Left cardiac atrium (tissue), 4 donors: ENCODE measurements at regions of chr1 and their contacts with region 1.

Region 1: GRCh38 chr1:236058141-236058934 is 6.6 kb downstream of the NID1 start:
- DNase-seq: no peak
- ATAC-seq: peak; percentile 11 to 32

Region 2: GRCh38 chr1:235679644-235680043 is 378.7 kb before region 1 on chr1:
- intact Hi-C with region 1: no loop called
- DNase-seq: no peak
- ATAC-seq: no peak

Region 3: GRCh38 chr1:236009857-236010256 is 48.5 kb before region 1 on chr1:
- intact Hi-C with region 1: loop called in 1 of 2 experiments (anchors 10 kb)
- DNase-seq: no peak
- ATAC-seq: peak; percentile 51 to 59

Region 4: DNA sequence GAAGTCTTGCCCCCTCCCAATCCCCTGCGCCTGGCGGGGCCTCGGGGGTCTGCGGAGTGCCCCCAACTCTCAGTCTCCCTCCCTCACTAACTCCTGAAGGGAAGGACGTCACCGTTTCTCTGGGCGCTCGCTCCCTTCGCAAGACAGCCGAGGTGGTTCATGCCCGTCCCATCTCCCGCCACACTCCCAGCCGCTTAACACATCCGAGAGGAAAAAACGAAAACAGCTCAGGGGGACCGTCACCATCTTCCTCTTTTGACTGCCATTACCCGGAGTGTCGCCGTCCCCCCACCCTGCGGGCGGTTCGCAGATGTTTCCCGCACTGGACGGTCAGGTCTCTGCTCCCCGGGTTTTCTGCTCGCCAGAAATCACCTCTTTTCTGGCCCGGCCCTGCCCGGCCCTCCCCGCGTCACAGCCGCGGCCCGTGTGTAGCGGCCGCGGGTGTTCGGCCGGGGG is 222.9 kb after region 1 on chr1:
- intact Hi-C with region 1: no loop called
- DNase-seq: peak; percentile 53
- ATAC-seq: peak; percentile 53 to 81